GM12878 (cell line): ENCODE measurements at regions of chr2 and their contacts with region 1.

Region 1: DNA sequence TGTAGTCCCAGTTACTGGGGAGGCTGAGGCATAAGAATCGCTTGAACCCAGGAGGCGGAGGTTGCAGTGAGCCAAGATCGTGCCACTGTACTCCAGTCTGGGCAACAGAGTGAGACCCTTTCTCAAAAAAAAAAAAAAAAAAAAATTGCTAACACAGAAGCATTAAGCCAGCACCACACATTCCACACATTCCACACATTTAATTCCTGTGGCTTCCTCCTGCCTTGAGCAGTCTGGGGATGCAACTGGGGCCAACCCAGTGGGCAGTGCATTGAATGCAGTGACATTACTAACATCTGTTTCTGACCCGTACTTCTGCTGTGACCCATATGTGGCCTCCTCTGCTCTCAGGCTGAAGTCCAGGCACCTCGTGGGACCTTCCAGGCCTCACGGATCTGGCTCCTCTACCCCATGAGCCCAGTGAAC is 107.0 kb downstream of the BCL2L11 start:
- DNase-seq: no peak
- ATAC-seq: no peak
- H3K4me3 ChIP-seq: no peak overlapping the region
- H3K27ac ChIP-seq: no peak overlapping the region
- H3K4me1 ChIP-seq: peaks cover 5% of the 10 kb centered on the region; the same call in 1 of the 2 replicates
- H3K27me3 ChIP-seq: no peaks in the 10 kb centered on the region
- CTCF ChIP-seq: no peak
- EP300 ChIP-seq: no peak
- POLR2A ChIP-seq: no peak
- RAD21 ChIP-seq: no peak

Region 2: GRCh38 chr2:111239107-111239506 is 11.4 kb after region 1 on chr2:
- CTCF ChIA-PET with region 1: interaction called, 3 read pairs
- POLR2A ChIA-PET with region 1: interaction called, 4 read pairs
- RAD21 ChIA-PET with region 1: interaction called, 4 read pairs
- SMC1A ChIA-PET with region 1: interaction called, 19 read pairs
- in situ Hi-C with region 1: no loop called
- intact Hi-C with region 1: no loop called
- DNase-seq: no peak
- ATAC-seq: peak; percentile 100
- H3K4me3 ChIP-seq: no peak overlapping the region
- H3K27ac ChIP-seq: no peak overlapping the region
- H3K4me1 ChIP-seq: peaks cover 9% of the 10 kb centered on the region
- H3K27me3 ChIP-seq: no peaks in the 10 kb centered on the region
- CTCF ChIP-seq: no peak
- EP300 ChIP-seq: peak in 1 of 2 experiments; percentile 57; a peak in 1 of 4 replicates
- POLR2A ChIP-seq: no peak
- RAD21 ChIP-seq: no peak